ENCODE measurements at regions of chr14 and their contacts with region 1.

Region 1: DNA sequence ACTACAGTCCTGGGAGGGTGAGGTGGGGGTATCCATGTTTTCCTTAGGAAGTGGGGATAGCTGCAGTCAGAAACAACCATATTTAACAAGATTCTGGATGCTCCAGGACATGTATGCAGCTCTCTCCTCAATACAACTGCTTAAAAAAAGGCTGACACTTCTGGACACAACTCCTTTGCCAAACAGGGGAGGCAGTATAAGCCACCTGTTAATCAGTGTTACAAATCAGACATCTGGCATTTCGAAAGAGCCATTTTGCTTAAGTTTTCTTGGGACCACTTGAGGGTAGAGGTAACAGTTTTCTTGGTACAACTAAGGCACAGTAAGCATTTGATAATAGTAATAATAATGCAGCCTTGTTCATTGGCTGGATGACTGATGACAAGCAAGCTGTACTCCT is 47.1 kb downstream of the RPGRIP1 start:
- DNase-seq: no peak
- ATAC-seq: no peak
- H3K4me3 ChIP-seq: no peak overlapping the region
- H3K4me3 Mint-ChIP-seq: no peak overlapping the region
- H3K27ac ChIP-seq: no peak overlapping the region
- H3K27ac Mint-ChIP-seq: no peak overlapping the region
- H3K4me1 ChIP-seq: no peaks in the 10 kb centered on the region
- H3K4me1 Mint-ChIP-seq: no peaks in the 10 kb centered on the region
- H3K27me3 ChIP-seq: no peaks in the 10 kb centered on the region
- H3K27me3 Mint-ChIP-seq: peaks cover 4 to 5% of the 10 kb centered on the region in 2 donors

Region 2: GRCh38 chr14:20820063-20820904 is 506.7 kb before region 1 on chr14:
- CTCF ChIA-PET with region 1: no interaction called
- POLR2A ChIA-PET with region 1: interaction called in 1 of 2 experiments, 12 read pairs
- DNase-seq: no peak
- ATAC-seq: no peak
- H3K4me3 ChIP-seq: no peak overlapping the region
- H3K4me3 Mint-ChIP-seq: no peak overlapping the region
- H3K27ac ChIP-seq: no peak overlapping the region
- H3K27ac Mint-ChIP-seq: no peak overlapping the region
- H3K4me1 ChIP-seq: no peaks in the 10 kb centered on the region
- H3K4me1 Mint-ChIP-seq: no peaks in the 10 kb centered on the region
- H3K27me3 ChIP-seq: no peaks in the 10 kb centered on the region
- H3K27me3 Mint-ChIP-seq: peaks cover 4 to 12% of the 10 kb centered on the region in 2 donors

Region 3: GRCh38 chr14:20989572-20990551 is 337.1 kb before region 1 on chr14 and contains the start of gene METTL17:
- CTCF ChIA-PET with region 1: no interaction called
- POLR2A ChIA-PET with region 1: no interaction called
- DNase-seq: peak; percentile 68 to 92 (median 78)
- ATAC-seq: peak; percentile 91 to 96 (median 94)
- H3K4me3 ChIP-seq: peak within 1 kb of the TSS; percentile 88 to 93
- H3K4me3 Mint-ChIP-seq: peak within 1 kb of the TSS; percentile 92 to 97 (median 95)
- H3K27ac ChIP-seq: peak within 1 kb of the TSS; percentile 69
- H3K27ac Mint-ChIP-seq: peak within 1 kb of the TSS; percentile 92 to 93
- H3K4me1 ChIP-seq: peaks cover 10 to 25% of the 10 kb centered on the region in 2 experiments
- H3K4me1 Mint-ChIP-seq: peaks cover 29 to 31% (median 30%) of the 10 kb centered on the region in 3 donors
- H3K27me3 ChIP-seq: no peaks in the 10 kb centered on the region
- H3K27me3 Mint-ChIP-seq: peaks cover 0 to 2% of the 10 kb centered on the region in 2 donors
- total RNA-seq, gene METTL17: 80.4 to 112 (median 99.0) TPM

Region 4: GRCh38 chr14:21213652-21214051 is 113.3 kb before region 1 on chr14:
- CTCF ChIA-PET with region 1: no interaction called
- POLR2A ChIA-PET with region 1: no interaction called
- DNase-seq: no peak
- ATAC-seq: no peak
- H3K4me3 ChIP-seq: no peak overlapping the region
- H3K4me3 Mint-ChIP-seq: no peak overlapping the region
- H3K27ac ChIP-seq: peak overlapping the region; percentile 28
- H3K27ac Mint-ChIP-seq: peak overlapping the region in 1 of 2 donors; percentile 48
- H3K4me1 ChIP-seq: peaks cover 16 to 23% of the 10 kb centered on the region in 2 experiments
- H3K4me1 Mint-ChIP-seq: peaks cover 55 to 72% (median 68%) of the 10 kb centered on the region in 3 donors
- H3K27me3 ChIP-seq: no peaks in the 10 kb centered on the region
- H3K27me3 Mint-ChIP-seq: no peaks in the 10 kb centered on the region

Region 5: DNA sequence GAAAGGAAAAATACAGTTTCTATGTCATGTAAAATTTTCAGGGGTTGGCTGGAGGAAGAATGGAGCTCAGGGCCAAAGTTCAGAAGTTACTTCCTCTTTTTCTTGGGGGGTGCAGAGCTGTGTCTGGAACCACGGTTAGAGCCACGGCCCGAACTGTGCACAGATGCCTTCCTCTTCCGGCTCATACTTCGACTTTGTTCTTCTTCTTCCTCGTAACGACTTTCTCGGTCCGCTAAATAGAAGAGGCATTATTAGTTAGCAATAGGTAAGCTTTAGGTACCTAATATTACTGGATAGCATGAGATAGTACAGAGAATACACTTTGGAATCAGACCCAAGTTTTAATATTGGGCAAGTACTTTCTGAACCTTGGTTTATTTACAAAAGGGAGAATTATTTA is 25.6 kb after region 1 on chr14:
- CTCF ChIA-PET with region 1: no interaction called
- POLR2A ChIA-PET with region 1: no interaction called
- DNase-seq: peak in 1 of 35 experiments; percentile 9
- ATAC-seq: no peak
- H3K4me3 ChIP-seq: no peak overlapping the region
- H3K4me3 Mint-ChIP-seq: no peak overlapping the region
- H3K27ac ChIP-seq: no peak overlapping the region
- H3K27ac Mint-ChIP-seq: peak overlapping the region in 1 of 2 donors; percentile 70
- H3K4me1 ChIP-seq: no peaks in the 10 kb centered on the region
- H3K4me1 Mint-ChIP-seq: no peaks in the 10 kb centered on the region
- H3K27me3 ChIP-seq: peaks cover 0 to 2% of the 10 kb centered on the region in 2 experiments
- H3K27me3 Mint-ChIP-seq: no peaks in the 10 kb centered on the region